GM18951 (cell line): ENCODE measurements at regions of chr4 and their contacts with region 1.

Region 1: GRCh38 chr4:6709230-6710114 is at the start of gene MRFAP1L1:
- POLR2A ChIP-seq: peak; percentile 76

Region 2: DNA sequence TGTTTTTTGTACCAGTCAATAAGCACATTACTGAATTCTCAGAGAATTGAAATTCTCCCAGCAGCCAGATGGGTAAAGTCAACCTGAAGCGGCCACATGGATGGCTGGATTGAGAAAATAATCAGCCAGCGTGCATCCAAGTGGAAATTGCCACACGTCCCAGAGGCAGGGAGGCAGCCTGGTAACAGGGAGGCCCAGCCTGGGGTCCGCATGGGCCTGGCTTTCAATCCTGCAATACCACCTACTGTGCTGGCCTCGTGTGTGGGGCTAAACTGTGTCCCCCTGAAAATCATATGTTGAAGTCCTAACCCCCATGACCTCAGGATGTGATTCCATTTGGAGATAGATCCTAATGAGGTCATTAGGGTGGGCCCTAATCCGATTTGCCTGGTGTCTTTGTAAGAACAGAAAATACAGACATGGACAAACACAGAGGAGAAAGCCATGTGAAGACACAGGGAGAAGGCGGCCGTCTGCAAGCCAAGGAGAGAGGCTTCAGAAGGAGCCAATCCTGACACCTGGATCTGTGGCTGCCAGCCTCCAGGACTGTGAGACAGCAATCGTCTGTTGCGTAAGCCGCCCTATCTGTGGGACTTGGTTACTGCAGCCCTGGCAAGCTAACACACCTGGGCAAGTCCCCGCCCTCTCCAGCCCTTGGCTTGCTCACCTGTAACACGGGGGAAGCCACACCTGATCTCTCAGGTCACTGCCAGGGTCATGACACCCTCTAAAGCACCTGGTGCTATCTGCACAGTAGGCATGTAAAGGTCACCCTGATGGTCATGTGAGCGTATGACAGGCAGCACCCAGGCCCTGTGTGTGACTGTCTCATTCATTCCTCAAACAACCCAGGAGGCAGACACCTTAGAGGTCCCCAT is 599.4 kb before region 1 on chr4:
- in situ Hi-C with region 1: no loop called
- POLR2A ChIP-seq: no peak

Region 3: GRCh38 chr4:6509587-6509986 is 199.9 kb before region 1 on chr4:
- in situ Hi-C with region 1: no loop called
- POLR2A ChIP-seq: no peak

Region 4: GRCh38 chr4:7042697-7043464 is 333.4 kb after region 1 on chr4 and contains the start of gene TADA2B:
- in situ Hi-C with region 1: loop called (anchors 10 kb)
- POLR2A ChIP-seq: peak; percentile 67

Region 5: DNA sequence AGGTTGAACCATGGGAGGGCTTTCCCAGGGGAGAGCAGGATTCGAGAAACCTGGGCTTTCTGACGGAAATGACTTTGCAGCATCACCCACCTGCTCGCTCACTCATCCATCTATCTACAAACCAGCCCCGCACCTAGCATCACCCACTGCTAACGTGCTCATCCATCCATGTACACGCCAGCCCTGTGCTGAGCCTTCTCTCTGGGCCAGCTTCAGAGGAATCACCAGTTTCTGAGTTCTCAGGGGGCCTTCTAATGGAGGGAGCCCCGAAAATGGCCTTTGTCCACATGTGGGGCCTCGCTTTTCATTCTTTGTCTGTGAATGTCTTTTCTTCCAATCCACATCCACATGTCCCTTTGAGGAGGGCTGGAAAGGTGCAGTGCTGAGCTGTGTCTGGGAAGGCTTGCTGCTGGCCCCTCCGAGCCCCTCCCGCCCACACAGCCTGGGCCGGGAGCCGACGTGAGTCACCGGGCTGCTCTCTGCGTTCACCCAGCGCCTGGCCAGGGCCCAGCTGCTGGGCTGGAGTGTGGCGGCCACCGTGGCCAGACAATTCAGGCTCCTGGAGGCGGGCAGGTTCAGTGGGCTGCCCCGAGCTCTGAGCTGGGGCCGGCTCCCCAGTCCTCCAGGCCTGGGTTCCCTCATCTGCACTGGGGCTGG is 497.6 kb after region 1 on chr4:
- in situ Hi-C with region 1: no loop called
- POLR2A ChIP-seq: no peak